ENCODE measurements at regions of chr11 and their contacts with region 1.

Region 1: GRCh38 chr11:119155733-119156492 is 7.1 kb downstream of the ABCG4 start:
- DNase-seq: no peak
- ATAC-seq: peak in 3 of 4 donors; percentile 19 to 57 (median 55)
- H3K4me3 ChIP-seq: no peak overlapping the region
- H3K27ac ChIP-seq: no peak overlapping the region
- H3K4me1 ChIP-seq: no peaks in the 10 kb centered on the region
- H3K27me3 ChIP-seq: no peaks in the 10 kb centered on the region
- CTCF ChIP-seq: peak in 1 of 4 donors; percentile 11
- POLR2A ChIP-seq: no peak

Region 2: DNA sequence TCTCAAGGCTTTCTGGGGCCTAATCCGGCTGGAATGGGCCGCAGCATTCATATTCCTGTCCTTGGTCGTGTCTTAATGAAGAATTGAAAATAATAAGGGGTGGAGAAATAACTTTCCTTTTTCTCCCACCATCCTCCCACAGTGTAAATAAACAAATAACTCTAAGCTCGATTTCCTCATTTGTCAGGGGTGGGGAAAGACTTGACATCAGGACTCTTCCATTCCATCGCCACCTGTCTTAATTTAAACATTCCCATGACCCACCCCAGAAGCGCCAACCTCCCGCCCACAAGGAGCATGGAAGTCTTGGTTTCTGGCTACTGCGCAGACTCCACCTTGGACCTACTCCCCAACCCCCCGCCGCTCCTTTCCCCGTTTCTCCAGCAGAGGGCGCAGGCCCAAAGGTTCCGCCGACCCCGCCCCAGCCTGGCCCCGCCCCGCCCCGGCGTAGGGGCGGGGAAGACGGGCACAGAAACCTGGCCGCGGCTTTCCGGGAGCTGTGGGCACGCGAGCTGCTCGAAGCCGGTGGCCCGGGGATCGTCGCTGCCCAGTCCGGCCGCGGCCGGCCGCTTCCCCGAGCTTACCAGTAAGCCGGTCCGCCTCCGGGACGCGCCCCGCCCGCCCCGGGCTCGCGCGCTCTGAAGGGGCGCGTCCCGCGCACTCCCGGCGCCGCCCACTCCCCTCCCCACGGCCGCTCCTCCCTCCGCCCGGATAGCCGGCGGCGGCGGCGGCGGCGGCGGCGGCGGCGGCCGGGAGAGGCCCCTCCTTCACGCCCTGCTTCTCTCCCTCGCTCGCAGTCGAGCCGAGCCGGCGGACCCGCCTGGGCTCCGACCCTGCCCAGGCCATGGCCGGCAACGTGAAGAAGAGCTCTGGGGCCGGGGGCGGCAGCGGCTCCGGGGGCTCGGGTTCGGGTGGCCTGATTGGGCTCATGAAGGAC is 49.9 kb after region 1 on chr11 and contains the start of gene CBL:
- intact Hi-C with region 1: loop called in 1 of 2 experiments (anchors 10 kb)
- DNase-seq: peak; percentile 94 to 96 (median 95)
- ATAC-seq: peak; percentile 95 to 97 (median 96)
- H3K4me3 ChIP-seq: peak within 1 kb of the TSS; percentile 75 to 98 (median 93)
- H3K27ac ChIP-seq: peak within 1 kb of the TSS; percentile 74 to 90 (median 79)
- H3K4me1 ChIP-seq: peaks cover 0 to 10% (median 0%) of the 10 kb centered on the region in 4 donors
- H3K27me3 ChIP-seq: no peaks in the 10 kb centered on the region
- CTCF ChIP-seq: peak; percentile 75 to 95 (median 85)
- POLR2A ChIP-seq: peak; percentile 71
- total RNA-seq, gene CBL: 3.1 to 7.1 (median 4.6) TPM